ENCODE measurements at regions of chr18 and their contacts with region 1.

Region 1: DNA sequence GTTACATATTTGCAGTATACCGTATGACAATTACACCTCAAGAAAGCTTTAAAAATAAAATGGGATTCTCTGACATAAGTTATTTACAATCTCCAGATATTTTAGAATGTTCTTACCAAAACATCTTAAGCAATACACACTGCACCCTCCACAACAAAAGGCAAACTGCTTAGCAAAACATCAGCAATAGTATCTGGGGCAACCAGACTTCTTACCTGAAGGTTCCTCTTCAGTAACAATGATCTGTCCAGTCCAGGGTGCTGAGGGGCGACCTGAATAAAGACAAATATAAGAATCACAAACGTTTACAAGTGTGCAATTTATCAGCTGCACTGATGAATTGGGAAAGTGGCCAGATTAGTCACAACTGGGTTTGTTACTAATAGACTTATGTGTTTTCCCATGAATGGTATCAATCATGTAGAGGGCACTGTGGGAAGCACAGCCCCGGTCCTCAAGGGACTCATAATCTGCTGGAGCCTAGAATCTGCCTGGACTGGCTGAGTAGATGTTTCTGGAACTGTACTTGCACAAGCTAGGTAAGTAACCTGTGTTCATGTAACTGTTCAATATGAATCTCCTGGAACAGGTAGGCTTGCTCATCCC is 70.7 kb downstream of the MYOM1 start:
- DNase-seq: no peak
- ATAC-seq: no peak
- H3K4me3 ChIP-seq: no peak overlapping the region
- H3K27ac ChIP-seq: no peak overlapping the region
- H3K4me1 ChIP-seq: peaks cover 0 to 6% of the 10 kb centered on the region in 2 donors
- H3K27me3 ChIP-seq: no peaks in the 10 kb centered on the region
- CTCF ChIP-seq: no peak

Region 2: GRCh38 chr18:3067722-3068121 is 81.3 kb before region 1 on chr18:
- intact Hi-C with region 1: no loop called
- DNase-seq: no peak
- ATAC-seq: no peak
- H3K4me3 ChIP-seq: no peak overlapping the region
- H3K27ac ChIP-seq: no peak overlapping the region
- H3K4me1 ChIP-seq: peaks cover 0 to 3% of the 10 kb centered on the region in 2 donors
- H3K27me3 ChIP-seq: no peaks in the 10 kb centered on the region
- CTCF ChIP-seq: no peak

Region 3: GRCh38 chr18:3245853-3246634 is 97.0 kb after region 1 on chr18:
- intact Hi-C with region 1: loop called in 1 of 2 experiments (anchors 10 kb)
- DNase-seq: peak; percentile 79 to 97 (median 94)
- ATAC-seq: peak; percentile 83
- H3K4me3 ChIP-seq: peak overlapping the region; percentile 90 to 93
- H3K27ac ChIP-seq: peak overlapping the region; percentile 99 to 100
- H3K4me1 ChIP-seq: peaks cover 20 to 46% of the 10 kb centered on the region in 2 donors
- H3K27me3 ChIP-seq: no peaks in the 10 kb centered on the region
- CTCF ChIP-seq: peak; percentile 89 to 95

Region 4: GRCh38 chr18:3692113-3692621 is 543.1 kb after region 1 on chr18:
- intact Hi-C with region 1: no loop called
- DNase-seq: no peak
- ATAC-seq: peak; percentile 75
- H3K4me3 ChIP-seq: no peak overlapping the region
- H3K27ac ChIP-seq: no peak overlapping the region
- H3K4me1 ChIP-seq: peaks cover 0 to 2% of the 10 kb centered on the region in 2 donors
- H3K27me3 ChIP-seq: no peaks in the 10 kb centered on the region
- CTCF ChIP-seq: no peak

Region 5: DNA sequence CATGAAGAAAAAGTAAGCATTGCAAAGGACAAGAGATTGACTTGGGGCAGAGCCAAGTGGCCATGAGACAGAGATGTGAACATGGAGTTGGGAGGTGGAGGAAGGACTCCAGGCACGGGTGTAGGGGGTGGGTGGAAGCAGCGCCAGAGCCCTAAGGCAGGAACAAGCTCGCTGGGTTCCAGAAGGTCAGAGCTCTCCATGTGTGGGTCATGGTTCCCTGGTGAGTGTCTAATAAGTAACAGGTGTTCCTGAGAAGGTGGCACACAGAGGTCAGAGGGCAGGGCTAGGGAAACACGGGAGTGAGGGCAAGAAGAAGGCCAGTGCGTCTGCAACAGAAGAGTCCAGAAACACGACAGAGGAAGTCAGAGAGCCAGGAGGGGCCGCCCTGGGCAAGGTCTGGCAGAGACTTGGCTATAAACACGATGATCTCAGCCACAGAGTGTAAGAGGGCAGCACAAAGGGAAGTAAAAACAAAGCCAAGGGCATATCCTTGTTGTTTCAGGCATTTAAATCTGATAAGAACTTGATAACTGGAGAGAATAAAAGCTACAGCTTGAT is 561.8 kb after region 1 on chr18:
- intact Hi-C with region 1: no loop called
- DNase-seq: peak in 1 of 4 donors; percentile 80
- ATAC-seq: peak; percentile 87
- H3K4me3 ChIP-seq: no peak overlapping the region
- H3K27ac ChIP-seq: peak overlapping the region in 1 of 2 donors; percentile 18
- H3K4me1 ChIP-seq: peaks cover 0 to 6% of the 10 kb centered on the region in 2 donors
- H3K27me3 ChIP-seq: no peaks in the 10 kb centered on the region
- CTCF ChIP-seq: no peak